K562 (cell line): ENCODE measurements at regions of chr7 and their contacts with region 1.

Region 1: DNA sequence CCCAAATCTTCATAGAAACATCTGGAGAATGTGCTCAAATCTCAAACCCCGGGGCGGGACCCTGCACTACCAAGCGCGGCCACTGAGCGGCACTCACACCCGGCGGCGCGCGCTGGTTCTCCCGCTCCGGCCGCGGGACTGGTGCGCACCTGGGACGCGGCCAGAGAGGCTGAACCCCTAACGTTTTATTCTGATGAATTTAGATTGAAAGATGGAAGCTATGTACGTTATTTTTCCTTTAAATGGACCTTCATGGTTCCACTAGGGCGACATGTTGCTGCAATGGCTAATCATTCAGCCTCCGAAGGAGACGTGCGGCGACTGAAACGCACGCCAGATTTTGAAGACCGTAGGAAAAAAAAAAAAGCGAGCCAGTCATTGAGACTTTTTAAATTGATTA is 107.0 kb upstream of the INSIG1 start:
- DNase-seq: peak; percentile 72 to 92 (median 89)
- ATAC-seq: peak; percentile 93
- H3K4me3 ChIP-seq: no peak overlapping the region
- H3K27ac ChIP-seq: no peak overlapping the region
- H3K4me1 ChIP-seq: peaks cover 0 to 7% of the 10 kb centered on the region in 2 experiments; a peak in 2 of 5 replicates
- H3K27me3 ChIP-seq: peaks cover 36 to 62% of the 10 kb centered on the region in 2 experiments
- CTCF ChIP-seq: peak; percentile 92 to 97 (median 95)
- EP300 ChIP-seq: no peak
- POLR2A ChIP-seq: no peak
- RAD21 ChIP-seq: peak; percentile 96 to 97

Region 2: DNA sequence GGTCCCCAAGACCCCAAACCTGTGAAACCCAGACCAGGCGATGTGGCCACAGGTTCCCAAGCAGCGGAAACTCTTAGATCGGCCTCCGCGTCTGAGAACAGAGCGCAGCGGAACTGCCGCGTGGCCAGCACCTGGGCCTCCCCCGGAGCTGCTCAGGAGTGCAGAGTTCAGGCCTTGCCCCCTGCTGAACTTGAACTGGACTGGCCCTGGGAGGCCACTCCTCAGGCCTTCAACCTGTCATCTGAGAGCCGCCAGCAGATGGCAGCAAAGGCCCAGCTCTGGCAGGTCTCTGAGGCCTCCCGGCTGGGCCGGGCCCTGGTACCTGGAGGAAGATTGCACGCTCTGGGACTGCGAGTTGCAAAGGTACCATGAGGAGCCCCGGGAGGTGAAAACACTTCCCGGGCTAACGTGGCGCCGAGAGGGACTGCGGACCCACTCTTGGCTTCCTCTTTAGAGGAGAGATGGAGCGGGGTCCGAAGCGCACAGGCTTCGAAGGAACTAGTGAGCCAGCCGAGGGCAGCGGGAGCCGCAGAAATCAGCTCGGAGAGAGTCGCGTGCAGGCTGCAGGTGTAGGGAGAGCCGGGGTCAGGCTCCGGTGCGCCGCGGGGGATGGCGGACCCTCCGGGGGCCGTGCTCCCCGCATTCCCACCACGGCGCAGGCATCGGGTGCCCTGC is 276.9 kb before region 1 on chr7:
- CTCF ChIA-PET with region 1: no interaction called
- POLR2A ChIA-PET with region 1: no interaction called
- in situ Hi-C with region 1: no loop called
- intact Hi-C with region 1: loop called (anchors 5 kb)
- DNase-seq: peak; percentile 87 to 97 (median 92)
- ATAC-seq: peak; percentile 99
- H3K4me3 ChIP-seq: no peak overlapping the region
- H3K27ac ChIP-seq: no peak overlapping the region
- H3K4me1 ChIP-seq: peaks cover 0 to 20% of the 10 kb centered on the region in 2 experiments; a peak in 2 of 5 replicates
- H3K27me3 ChIP-seq: peaks cover 26 to 92% of the 10 kb centered on the region in 2 experiments
- CTCF ChIP-seq: peak; percentile 92 to 97 (median 96)
- EP300 ChIP-seq: no peak
- POLR2A ChIP-seq: no peak
- RAD21 ChIP-seq: peak; percentile 74 to 93

Region 3: GRCh38 chr7:155322530-155322929 is 131.8 kb after region 1 on chr7:
- CTCF ChIA-PET with region 1: no interaction called
- POLR2A ChIA-PET with region 1: no interaction called
- in situ Hi-C with region 1: no loop called
- intact Hi-C with region 1: no loop called
- DNase-seq: no peak
- ATAC-seq: no peak
- H3K4me3 ChIP-seq: no peak overlapping the region
- H3K27ac ChIP-seq: no peak overlapping the region
- H3K4me1 ChIP-seq: peaks cover 4 to 16% of the 10 kb centered on the region in 2 experiments
- H3K27me3 ChIP-seq: peaks cover 0 to 21% of the 10 kb centered on the region in 2 experiments; a peak in 3 of 5 replicates
- CTCF ChIP-seq: no peak
- EP300 ChIP-seq: no peak
- POLR2A ChIP-seq: no peak
- RAD21 ChIP-seq: no peak

Region 4: DNA sequence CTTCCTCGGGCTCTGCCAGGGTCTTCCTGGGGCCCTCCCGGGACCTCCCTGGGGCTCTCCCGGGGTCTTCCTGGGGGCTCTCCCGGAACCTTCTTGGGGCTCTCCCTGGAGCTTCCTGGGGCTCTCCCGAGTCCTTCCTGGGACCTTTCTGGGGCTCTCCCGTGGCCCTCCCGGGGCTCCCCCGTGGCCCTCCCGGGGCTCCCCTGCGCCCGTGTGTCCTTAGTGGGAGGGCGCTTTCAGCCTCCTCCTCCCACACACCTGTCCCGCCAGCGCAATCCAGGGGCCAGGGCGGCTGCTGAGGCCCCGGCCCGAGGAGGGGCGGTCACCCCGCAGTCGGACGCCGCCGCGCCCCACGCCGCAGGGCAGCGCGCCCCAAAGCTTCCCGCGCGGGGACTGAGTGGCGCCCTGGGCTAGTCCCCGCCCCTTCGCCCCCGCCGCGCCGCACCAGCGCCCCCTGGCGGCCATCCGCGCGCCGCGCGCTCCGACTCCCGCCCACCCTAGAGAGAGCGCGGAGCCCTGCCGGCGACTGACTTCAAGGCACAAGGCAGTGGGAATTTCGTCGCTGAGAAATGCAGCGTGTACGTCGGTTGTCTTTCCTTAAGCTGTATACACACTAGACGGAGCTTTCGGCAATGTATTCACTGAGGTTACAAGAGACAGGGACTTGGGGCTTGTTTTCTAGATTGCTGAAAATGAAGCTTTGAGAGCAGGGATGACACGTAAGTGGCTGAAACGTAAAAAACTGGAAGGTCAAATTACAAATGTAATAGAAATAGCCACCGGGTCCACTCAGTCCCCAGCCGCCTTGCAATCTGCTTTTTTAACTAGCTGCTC is 154.1 kb after region 1 on chr7:
- CTCF ChIA-PET with region 1: interaction called, 29 read pairs
- POLR2A ChIA-PET with region 1: no interaction called
- in situ Hi-C with region 1: loop called (anchors 5 kb)
- intact Hi-C with region 1: loop called (anchors 1 kb)
- DNase-seq: peak; percentile 90 to 99 (median 96)
- ATAC-seq: peak; percentile 98
- H3K4me3 ChIP-seq: peak overlapping the region; percentile 46
- H3K27ac ChIP-seq: no peak overlapping the region
- H3K4me1 ChIP-seq: peaks cover 0 to 17% of the 10 kb centered on the region in 2 experiments; a peak in 3 of 5 replicates
- H3K27me3 ChIP-seq: peaks cover 29 to 48% of the 10 kb centered on the region in 2 experiments
- CTCF ChIP-seq: peak; percentile 86 to 97 (median 96)
- EP300 ChIP-seq: no peak
- POLR2A ChIP-seq: no peak
- RAD21 ChIP-seq: peak; percentile 95 to 96

Region 5: DNA sequence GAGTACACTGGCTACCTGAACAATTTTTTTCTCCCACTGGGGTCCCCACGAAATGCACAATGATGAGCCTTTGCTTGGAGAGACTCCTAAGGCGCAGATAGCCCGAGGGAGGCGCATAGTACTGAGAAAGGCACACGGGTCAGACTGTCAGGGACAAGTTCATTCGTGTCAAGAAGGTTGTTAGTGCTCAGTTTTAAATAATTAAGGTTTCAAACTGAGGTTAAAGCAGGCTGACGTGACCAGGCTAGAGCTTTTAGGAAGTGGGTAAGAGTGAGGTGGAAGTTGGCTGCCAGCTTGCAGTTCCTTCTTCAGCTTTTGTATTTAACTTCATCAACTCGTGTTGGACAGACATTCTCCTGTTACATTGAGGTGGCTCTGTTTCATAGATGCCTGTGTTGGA is 485.4 kb after region 1 on chr7:
- CTCF ChIA-PET with region 1: no interaction called
- POLR2A ChIA-PET with region 1: no interaction called
- in situ Hi-C with region 1: no loop called
- intact Hi-C with region 1: no loop called
- DNase-seq: no peak
- ATAC-seq: peak; percentile 56
- H3K4me3 ChIP-seq: no peak overlapping the region
- H3K27ac ChIP-seq: no peak overlapping the region
- H3K4me1 ChIP-seq: peaks cover 0 to 28% of the 10 kb centered on the region in 2 experiments; a peak in 4 of 5 replicates
- H3K27me3 ChIP-seq: no peaks in the 10 kb centered on the region
- CTCF ChIP-seq: no peak
- EP300 ChIP-seq: no peak
- POLR2A ChIP-seq: no peak
- RAD21 ChIP-seq: no peak